Left ventricle myocardium superior (tissue), 1 donor: ENCODE measurements at regions of chr1 and their contacts with region 1.

Region 1: DNA sequence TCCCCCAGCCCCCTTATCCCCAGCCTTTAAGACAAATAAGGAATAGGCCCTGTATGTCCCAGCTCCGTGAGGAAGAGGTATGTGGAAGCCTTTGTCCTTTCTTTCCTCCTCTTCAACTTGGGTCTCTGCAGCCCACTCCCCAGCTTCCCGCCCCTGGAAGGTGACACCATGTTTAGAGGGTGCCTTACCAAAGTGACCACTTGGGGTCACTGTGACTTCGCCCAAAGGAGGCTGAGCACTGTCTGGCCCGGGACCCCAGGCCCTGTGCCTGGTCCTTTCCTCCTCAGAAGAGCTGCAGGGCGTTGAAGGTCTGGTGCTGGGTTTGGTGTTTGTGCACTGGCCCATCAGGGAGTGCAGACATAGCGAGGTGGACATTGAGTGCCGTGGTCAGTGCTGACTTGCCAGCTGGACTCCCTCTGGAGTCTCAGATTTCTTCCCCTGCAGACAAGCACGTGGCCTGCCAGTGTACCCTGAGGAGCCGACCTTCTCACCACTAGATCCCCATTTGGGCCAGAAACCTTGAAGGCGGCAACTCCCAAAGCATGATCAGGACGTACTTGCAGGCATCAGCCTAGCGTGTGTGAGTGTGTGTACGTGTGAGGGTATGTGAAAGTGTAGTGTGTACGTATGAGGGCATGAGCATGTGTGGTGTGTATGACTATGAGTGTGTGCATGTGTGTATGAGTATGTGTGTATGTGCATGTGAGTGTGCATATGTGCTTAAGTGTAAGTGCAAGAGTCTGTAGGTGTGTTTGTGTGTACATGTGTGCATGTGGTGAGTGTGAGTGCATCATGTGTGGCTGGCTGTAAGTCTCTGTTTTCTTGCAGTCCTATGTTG is 181.4 kb upstream of the KIAA0040 start:
- DNase-seq: peak; percentile 35
- ATAC-seq: peak; percentile 64

Region 2: DNA sequence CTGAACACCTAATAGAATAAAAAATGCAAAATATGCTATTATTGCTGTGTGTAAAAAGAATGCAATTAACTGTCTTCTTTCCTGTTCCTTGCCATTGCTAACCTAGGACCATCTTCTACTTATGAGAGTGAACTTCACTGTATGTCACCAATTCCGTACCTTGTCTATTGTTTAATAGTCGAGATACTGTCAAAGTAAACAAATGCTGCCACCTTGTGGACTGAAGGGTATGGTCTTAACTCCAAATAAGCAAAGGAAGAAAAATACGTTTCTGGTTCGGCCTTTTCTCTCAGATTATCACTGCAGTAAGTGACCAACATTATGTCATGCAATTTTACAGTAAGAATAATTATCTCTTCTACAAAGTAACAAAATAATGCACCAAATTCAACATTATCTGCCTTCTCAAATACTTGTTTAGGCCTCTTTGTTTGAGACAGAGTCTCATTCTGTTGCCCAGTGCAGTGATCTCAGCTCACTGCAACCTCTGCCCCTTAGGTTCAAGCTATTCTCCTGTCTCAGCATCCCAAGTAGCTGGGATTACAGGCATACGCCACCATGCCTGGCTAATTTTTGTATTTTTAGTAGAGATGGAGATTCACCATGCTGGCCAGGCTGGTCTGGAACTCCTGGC is 699.6 kb after region 1 on chr1:
- intact Hi-C with region 1: loop called (anchors 10 kb)
- DNase-seq: no peak
- ATAC-seq: peak; percentile 72